OCI-LY7 (cell line): ENCODE measurements at regions of chr2 and their contacts with region 1.

Region 1: DNA sequence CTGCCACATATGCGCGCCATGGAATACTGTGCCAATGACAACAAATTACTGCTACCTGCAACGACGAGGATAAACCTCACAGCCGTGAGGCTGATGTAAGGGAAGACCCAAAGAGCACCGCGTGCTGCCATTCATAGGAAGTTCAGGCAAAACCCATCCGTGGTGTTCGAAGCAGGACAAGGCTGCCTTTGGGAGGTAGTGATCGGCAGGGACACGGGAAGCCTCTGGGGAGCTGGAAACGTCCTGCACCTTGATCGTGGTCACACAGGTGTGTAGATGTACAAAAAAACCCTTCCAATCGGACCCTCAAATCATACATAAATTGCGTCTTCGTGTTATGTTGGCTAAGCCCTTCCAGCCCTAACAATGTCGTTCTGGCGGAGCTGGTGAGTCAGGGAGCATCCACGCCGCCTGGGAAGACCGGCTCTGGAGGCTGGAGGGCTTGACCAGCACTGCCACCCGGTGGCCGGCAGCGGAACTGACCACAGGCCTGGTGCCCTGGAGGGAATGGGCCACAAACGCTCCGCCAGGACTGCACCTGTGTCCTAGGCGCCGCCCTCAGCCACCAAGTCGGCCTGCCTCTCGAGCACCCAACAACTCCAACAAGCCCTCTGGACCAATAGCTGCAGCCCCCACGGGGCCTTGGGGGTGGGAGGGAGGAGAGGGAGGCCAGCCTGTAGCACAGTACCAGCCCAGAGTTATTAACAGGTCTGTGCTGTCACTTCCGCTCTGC is 4.1 kb upstream of the NEURL3 start:
- DNase-seq: peak; percentile 73
- H3K4me3 ChIP-seq: no peak overlapping the region
- H3K27ac ChIP-seq: no peak overlapping the region
- H3K4me1 ChIP-seq: no peaks in the 10 kb centered on the region
- CTCF ChIP-seq: peak; percentile 84

Region 2: GRCh38 chr2:96369186-96369585 is 140.1 kb before region 1 on chr2:
- CTCF ChIA-PET with region 1: no interaction called
- POLR2A ChIA-PET with region 1: no interaction called
- intact Hi-C with region 1: loop called (anchors 5 kb)
- DNase-seq: no peak
- H3K4me3 ChIP-seq: no peak overlapping the region
- H3K27ac ChIP-seq: no peak overlapping the region
- H3K4me1 ChIP-seq: no peaks in the 10 kb centered on the region
- CTCF ChIP-seq: no peak

Region 3: DNA sequence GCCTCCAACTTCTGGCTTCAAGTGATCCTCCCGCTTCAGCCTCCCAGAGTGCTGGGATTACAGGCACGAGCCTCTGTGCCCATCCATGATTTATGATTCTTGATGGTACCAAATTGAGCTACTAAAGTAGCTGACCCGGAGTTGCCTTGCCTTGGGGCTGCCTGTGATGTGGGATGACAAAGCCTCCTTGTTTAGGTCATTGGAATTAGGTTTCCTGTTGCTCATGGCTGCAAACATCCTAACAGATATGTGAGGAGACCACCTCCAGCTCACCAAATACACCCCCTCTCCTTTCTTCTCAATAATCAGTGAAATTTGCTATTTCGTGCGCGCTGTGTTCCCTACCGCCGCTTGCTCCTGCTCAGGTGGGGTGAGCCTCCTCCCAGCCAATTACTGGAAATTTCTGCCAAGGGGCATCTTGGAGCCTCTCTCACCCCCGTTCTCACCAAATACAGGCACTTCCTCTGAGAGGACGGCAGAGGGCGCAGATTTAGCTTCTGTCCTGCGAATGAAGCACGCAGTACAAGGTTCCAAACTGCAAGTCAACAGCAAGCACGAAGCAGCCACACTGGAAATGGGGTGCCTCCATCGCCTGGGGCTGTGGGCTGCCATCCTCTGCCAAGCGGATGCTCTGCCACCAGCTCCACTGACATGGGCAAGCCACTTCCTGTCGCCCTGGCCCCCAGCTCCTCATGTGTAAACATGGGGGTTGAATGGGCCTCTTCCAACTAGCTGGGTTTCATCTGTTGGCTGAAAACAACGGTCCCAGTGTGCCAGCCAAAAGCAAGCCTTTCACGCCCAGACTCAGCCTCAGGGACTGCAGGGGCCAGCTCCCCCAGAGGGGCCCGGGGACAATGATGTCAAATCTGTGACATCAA is 102.0 kb before region 1 on chr2:
- CTCF ChIA-PET with region 1: no interaction called
- POLR2A ChIA-PET with region 1: no interaction called
- intact Hi-C with region 1: loop called (anchors 1 kb)
- DNase-seq: peak; percentile 72
- H3K4me3 ChIP-seq: no peak overlapping the region
- H3K27ac ChIP-seq: no peak overlapping the region
- H3K4me1 ChIP-seq: peaks cover 4% of the 10 kb centered on the region
- CTCF ChIP-seq: peak; percentile 86

Region 4: DNA sequence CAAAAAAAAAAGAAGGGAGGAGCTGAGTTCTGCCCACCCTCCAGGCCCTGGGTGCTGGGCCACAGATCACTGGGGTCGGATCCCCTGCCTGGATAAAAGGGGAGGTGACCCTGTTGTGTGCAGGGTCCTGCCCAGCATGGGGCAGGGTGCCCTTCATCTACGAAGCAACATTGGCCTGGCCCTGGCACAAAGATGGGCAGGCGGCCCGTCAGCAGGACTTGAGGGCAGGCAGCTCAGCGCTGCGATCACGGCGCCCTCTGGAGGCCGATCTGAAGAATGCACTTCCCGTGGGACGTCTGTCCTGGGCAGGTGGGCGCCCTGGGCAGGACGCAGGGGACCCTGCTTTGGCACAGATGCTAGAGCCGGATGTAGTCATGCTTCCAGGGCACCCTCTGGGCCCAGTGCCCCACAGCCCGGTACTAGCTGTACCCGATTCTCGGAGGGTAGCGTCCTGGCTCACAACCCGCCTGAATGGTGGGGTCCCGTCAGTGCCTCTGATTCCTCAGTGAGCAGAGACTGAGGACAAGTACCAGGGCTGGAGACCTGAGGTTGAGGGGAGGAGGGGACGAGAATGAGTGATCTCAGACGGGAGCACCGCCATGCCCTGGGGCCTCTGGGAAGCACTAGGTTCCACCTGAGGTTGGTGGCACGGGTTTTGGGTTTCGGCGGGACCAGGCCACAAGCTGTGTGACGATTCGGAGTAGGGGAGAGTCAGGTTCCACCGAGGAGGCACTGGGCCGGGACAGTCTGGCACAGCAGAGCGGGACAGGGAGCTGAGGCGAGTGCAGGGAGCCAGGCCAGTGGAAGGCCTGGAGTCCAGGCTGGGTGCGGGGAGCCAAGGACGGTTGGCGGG is 45.2 kb after region 1 on chr2:
- CTCF ChIA-PET with region 1: interaction called, 3 read pairs
- POLR2A ChIA-PET with region 1: no interaction called
- intact Hi-C with region 1: loop called (anchors 1 kb)
- DNase-seq: peak; percentile 69
- H3K4me3 ChIP-seq: no peak overlapping the region
- H3K27ac ChIP-seq: no peak overlapping the region
- H3K4me1 ChIP-seq: no peaks in the 10 kb centered on the region
- CTCF ChIP-seq: peak; percentile 91

Region 5: GRCh38 chr2:96565111-96565510 is 55.8 kb after region 1 on chr2:
- CTCF ChIA-PET with region 1: no interaction called
- POLR2A ChIA-PET with region 1: no interaction called
- intact Hi-C with region 1: no loop called
- DNase-seq: no peak
- H3K4me3 ChIP-seq: no peak overlapping the region
- H3K27ac ChIP-seq: no peak overlapping the region
- H3K4me1 ChIP-seq: no peaks in the 10 kb centered on the region
- CTCF ChIP-seq: no peak